Naive thymus-derived CD4-positive, alpha-beta T cell (primary cell): ENCODE measurements at regions of chr10 and their contacts with region 1.

Region 1: GRCh38 chr10:111598436-111599059 is 521.7 kb downstream of the ADRA2A start:
- DNase-seq: peak in 8 of 9 donors; percentile 1 to 47 (median 30)
- ATAC-seq: peak; percentile 62
- H3K4me3 ChIP-seq: no peak overlapping the region
- H3K4me3 Mint-ChIP-seq: no peak overlapping the region
- H3K27ac ChIP-seq: no peak overlapping the region
- H3K27ac Mint-ChIP-seq: no peak overlapping the region
- H3K4me1 ChIP-seq: no peaks in the 10 kb centered on the region
- H3K4me1 Mint-ChIP-seq: no peaks in the 10 kb centered on the region
- H3K27me3 ChIP-seq: no peaks in the 10 kb centered on the region
- H3K27me3 Mint-ChIP-seq: peaks cover 0 to 21% (median 12%) of the 10 kb centered on the region in 5 donors

Region 2: GRCh38 chr10:111076191-111076681 is 522.3 kb before region 1 on chr10:
- CTCF ChIA-PET with region 1: no interaction called
- POLR2A ChIA-PET with region 1: no interaction called
- intact Hi-C with region 1: loop called in 1 of 2 experiments (anchors 5 kb)
- DNase-seq: peak in 6 of 9 donors; percentile 17 to 57 (median 30)
- ATAC-seq: peak; percentile 68
- H3K4me3 ChIP-seq: peak overlapping the region; percentile 44
- H3K4me3 Mint-ChIP-seq: peak overlapping the region; percentile 24 to 85 (median 66)
- H3K27ac ChIP-seq: no peak overlapping the region
- H3K27ac Mint-ChIP-seq: no peak overlapping the region
- H3K4me1 ChIP-seq: peaks cover 0 to 13% of the 10 kb centered on the region in 2 donors
- H3K4me1 Mint-ChIP-seq: peaks cover 5 to 20% (median 10%) of the 10 kb centered on the region in 7 donors
- H3K27me3 ChIP-seq: peaks cover 0 to 21% of the 10 kb centered on the region in 2 donors
- H3K27me3 Mint-ChIP-seq: peaks cover 57 to 76% (median 64%) of the 10 kb centered on the region in 5 donors

Region 3: GRCh38 chr10:111578076-111578475 is 20.5 kb before region 1 on chr10:
- CTCF ChIA-PET with region 1: no interaction called
- POLR2A ChIA-PET with region 1: no interaction called
- intact Hi-C with region 1: no loop called
- DNase-seq: no peak
- ATAC-seq: no peak
- H3K4me3 ChIP-seq: no peak overlapping the region
- H3K4me3 Mint-ChIP-seq: no peak overlapping the region
- H3K27ac ChIP-seq: no peak overlapping the region
- H3K27ac Mint-ChIP-seq: no peak overlapping the region
- H3K4me1 ChIP-seq: no peaks in the 10 kb centered on the region
- H3K4me1 Mint-ChIP-seq: no peaks in the 10 kb centered on the region
- H3K27me3 ChIP-seq: no peaks in the 10 kb centered on the region
- H3K27me3 Mint-ChIP-seq: peaks cover 0 to 44% (median 34%) of the 10 kb centered on the region in 5 donors

Region 4: DNA sequence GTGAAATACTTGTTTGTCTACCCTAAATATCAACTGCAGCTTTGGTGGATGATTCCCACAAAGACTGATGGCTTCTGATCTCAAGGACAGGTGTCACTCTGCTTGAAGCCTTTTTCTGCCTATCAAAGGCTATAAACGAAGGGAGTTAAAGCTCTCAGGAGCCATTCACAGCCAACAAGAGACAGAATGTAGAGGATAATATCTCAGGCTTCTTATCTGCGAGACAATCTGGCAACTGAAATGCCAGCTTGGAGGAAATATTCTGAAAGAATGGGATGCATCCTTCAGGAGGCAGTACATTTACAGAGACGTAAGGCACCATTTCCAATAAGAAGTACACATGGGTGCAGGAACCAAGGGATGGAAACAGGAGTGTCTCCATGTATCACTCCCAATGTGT is 35.6 kb after region 1 on chr10:
- CTCF ChIA-PET with region 1: no interaction called
- POLR2A ChIA-PET with region 1: no interaction called
- intact Hi-C with region 1: no loop called
- DNase-seq: no peak
- ATAC-seq: no peak
- H3K4me3 ChIP-seq: no peak overlapping the region
- H3K4me3 Mint-ChIP-seq: no peak overlapping the region
- H3K27ac ChIP-seq: no peak overlapping the region
- H3K27ac Mint-ChIP-seq: no peak overlapping the region
- H3K4me1 ChIP-seq: no peaks in the 10 kb centered on the region
- H3K4me1 Mint-ChIP-seq: no peaks in the 10 kb centered on the region
- H3K27me3 ChIP-seq: no peaks in the 10 kb centered on the region
- H3K27me3 Mint-ChIP-seq: peaks cover 0 to 18% (median 15%) of the 10 kb centered on the region in 5 donors

Region 5: GRCh38 chr10:111856631-111857030 is 258.1 kb after region 1 on chr10:
- CTCF ChIA-PET with region 1: no interaction called
- POLR2A ChIA-PET with region 1: no interaction called
- intact Hi-C with region 1: no loop called
- DNase-seq: no peak
- ATAC-seq: no peak
- H3K4me3 ChIP-seq: no peak overlapping the region
- H3K4me3 Mint-ChIP-seq: no peak overlapping the region
- H3K27ac ChIP-seq: no peak overlapping the region
- H3K27ac Mint-ChIP-seq: no peak overlapping the region
- H3K4me1 ChIP-seq: no peaks in the 10 kb centered on the region
- H3K4me1 Mint-ChIP-seq: no peaks in the 10 kb centered on the region
- H3K27me3 ChIP-seq: no peaks in the 10 kb centered on the region
- H3K27me3 Mint-ChIP-seq: peaks cover 0 to 15% (median 5%) of the 10 kb centered on the region in 5 donors